MCF 10A (cell line): ENCODE measurements at regions of chr6 and their contacts with region 1.

Region 1: GRCh38 chr6:105317607-105318533 is 85.0 kb downstream of the PREP start:
- DNase-seq: peak; percentile 44
- H3K4me3 Mint-ChIP-seq: no peak overlapping the region
- H3K27ac Mint-ChIP-seq: peak overlapping the region; percentile 69
- H3K4me1 Mint-ChIP-seq: peaks cover 20% of the 10 kb centered on the region
- H3K27me3 Mint-ChIP-seq: no peaks in the 10 kb centered on the region
- CTCF ChIP-seq: peak; percentile 26

Region 2: GRCh38 chr6:105305521-105305920 is 12.3 kb before region 1 on chr6:
- CTCF ChIA-PET with region 1: interaction called, 12 read pairs
- POLR2A ChIA-PET with region 1: interaction called, 3 read pairs
- intact Hi-C with region 1: no loop called
- DNase-seq: no peak
- H3K4me3 Mint-ChIP-seq: no peak overlapping the region
- H3K27ac Mint-ChIP-seq: peak overlapping the region; percentile 35
- H3K4me1 Mint-ChIP-seq: no peaks in the 10 kb centered on the region
- H3K27me3 Mint-ChIP-seq: no peaks in the 10 kb centered on the region
- CTCF ChIP-seq: no peak

Region 3: GRCh38 chr6:105357165-105357564 is 39.3 kb after region 1 on chr6:
- CTCF ChIA-PET with region 1: interaction called, 78 read pairs
- POLR2A ChIA-PET with region 1: interaction called, 9 read pairs
- intact Hi-C with region 1: no loop called
- DNase-seq: no peak
- H3K4me3 Mint-ChIP-seq: no peak overlapping the region
- H3K27ac Mint-ChIP-seq: no peak overlapping the region
- H3K4me1 Mint-ChIP-seq: peaks cover 15% of the 10 kb centered on the region
- H3K27me3 Mint-ChIP-seq: no peaks in the 10 kb centered on the region
- CTCF ChIP-seq: no peak

Region 4: GRCh38 chr6:105374010-105374420 is 56.1 kb after region 1 on chr6:
- CTCF ChIA-PET with region 1: interaction called, 4 read pairs
- POLR2A ChIA-PET with region 1: interaction called, 19 read pairs
- intact Hi-C with region 1: no loop called
- DNase-seq: peak; percentile 71
- H3K4me3 Mint-ChIP-seq: peak overlapping the region; percentile 52
- H3K27ac Mint-ChIP-seq: peak overlapping the region; percentile 95
- H3K4me1 Mint-ChIP-seq: peaks cover 38% of the 10 kb centered on the region
- H3K27me3 Mint-ChIP-seq: no peaks in the 10 kb centered on the region
- CTCF ChIP-seq: no peak

Region 5: DNA sequence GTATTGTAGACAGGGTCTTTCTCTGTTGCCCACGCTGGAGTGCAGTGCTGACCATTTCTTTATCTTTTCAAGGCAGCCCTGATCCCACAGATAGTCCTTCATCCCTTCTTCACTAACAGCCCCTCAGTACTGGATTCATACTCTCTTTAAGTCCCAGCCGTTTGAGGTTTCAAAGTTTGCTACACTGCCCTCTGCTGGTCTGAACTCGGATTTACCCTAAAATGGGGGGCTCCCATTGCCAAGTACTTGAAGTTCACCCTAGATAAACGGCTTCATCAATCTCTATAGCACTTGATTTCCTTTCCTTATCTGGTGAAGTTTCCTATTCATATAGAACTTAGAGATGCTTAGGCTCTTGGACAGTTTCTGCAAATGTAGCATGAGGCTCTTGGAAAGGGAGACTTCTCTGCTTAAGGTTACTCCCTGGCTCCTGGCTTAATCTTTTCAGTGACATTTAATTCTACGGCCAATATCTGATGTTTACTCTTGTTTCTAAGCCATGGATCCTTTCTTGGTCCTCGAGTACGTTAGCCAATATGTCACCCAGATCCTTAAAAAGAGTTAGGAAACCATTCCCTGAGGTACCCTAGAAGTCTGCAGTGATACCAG is 106.4 kb after region 1 on chr6:
- CTCF ChIA-PET with region 1: interaction called, 5 read pairs
- POLR2A ChIA-PET with region 1: no interaction called
- intact Hi-C with region 1: loop called (anchors 5 kb)
- DNase-seq: peak; percentile 68
- H3K4me3 Mint-ChIP-seq: no peak overlapping the region
- H3K27ac Mint-ChIP-seq: no peak overlapping the region
- H3K4me1 Mint-ChIP-seq: peaks cover 24% of the 10 kb centered on the region
- H3K27me3 Mint-ChIP-seq: no peaks in the 10 kb centered on the region
- CTCF ChIP-seq: peak; percentile 47